Activated B cell treated with CpG ODN at 0.5 μM for 24 hours (primary cell): ENCODE measurements at regions of chr3 and their contacts with region 1.

Region 1: GRCh38 chr3:128187495-128187894 is 34.2 kb downstream of the EEFSEC start:
- DNase-seq: no peak
- ATAC-seq: no peak
- H3K4me3 Mint-ChIP-seq: no peak overlapping the region
- H3K27ac Mint-ChIP-seq: no peak overlapping the region
- H3K4me1 Mint-ChIP-seq: peaks cover 10% of the 10 kb centered on the region
- H3K27me3 Mint-ChIP-seq: no peaks in the 10 kb centered on the region
- CTCF ChIP-seq: no peak

Region 2: DNA sequence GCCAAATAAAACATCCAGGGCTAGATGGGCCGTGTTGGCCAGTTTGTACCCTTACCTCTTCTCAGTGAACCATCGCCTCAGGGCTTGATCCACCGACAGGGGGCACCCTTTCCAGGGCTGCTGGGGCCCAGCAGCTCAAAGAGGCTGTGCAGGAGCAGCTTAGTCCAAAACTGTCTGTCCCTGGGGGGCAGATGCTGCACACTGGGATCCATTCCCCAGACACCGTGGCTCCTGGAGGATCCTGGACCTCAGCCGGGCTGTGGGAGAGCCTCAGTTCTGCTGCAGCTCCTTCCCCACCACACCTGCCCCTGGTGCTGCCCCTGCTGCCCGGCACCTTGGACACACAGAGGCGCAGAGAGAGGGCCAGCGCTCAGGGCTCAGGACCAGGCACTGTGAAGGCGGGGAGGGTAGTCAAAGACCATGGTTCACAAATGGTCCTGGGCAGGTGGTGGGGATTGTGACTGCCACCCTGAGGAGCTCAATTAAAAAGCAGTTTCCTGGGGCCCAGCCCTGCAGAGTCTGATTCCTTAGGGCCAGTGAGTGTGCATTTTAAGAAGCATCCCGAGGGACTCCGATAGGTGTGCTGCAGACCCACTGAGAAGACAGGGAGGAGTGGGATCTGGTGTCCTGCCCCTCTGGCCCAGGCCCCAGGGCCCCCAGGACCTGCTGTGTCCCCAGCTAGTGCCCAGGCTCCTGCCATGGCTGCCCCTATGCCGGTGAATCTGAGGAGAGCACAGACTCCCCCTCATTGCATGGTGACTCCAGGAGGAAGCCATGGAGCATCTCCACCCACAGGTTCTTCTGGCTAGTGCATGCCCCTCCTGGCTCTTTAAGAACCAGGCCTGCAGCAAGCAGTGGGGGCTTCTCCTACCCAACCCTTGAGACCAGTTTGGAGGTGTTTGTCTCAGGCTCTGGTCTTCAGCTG is 813.1 kb before region 1 on chr3:
- CTCF ChIA-PET with region 1: no interaction called
- POLR2A ChIA-PET with region 1: no interaction called
- intact Hi-C with region 1: no loop called
- DNase-seq: no peak
- ATAC-seq: no peak
- H3K4me3 Mint-ChIP-seq: no peak overlapping the region
- H3K27ac Mint-ChIP-seq: no peak overlapping the region
- H3K4me1 Mint-ChIP-seq: no peaks in the 10 kb centered on the region
- H3K27me3 Mint-ChIP-seq: peaks cover 17% of the 10 kb centered on the region
- CTCF ChIP-seq: no peak

Region 3: DNA sequence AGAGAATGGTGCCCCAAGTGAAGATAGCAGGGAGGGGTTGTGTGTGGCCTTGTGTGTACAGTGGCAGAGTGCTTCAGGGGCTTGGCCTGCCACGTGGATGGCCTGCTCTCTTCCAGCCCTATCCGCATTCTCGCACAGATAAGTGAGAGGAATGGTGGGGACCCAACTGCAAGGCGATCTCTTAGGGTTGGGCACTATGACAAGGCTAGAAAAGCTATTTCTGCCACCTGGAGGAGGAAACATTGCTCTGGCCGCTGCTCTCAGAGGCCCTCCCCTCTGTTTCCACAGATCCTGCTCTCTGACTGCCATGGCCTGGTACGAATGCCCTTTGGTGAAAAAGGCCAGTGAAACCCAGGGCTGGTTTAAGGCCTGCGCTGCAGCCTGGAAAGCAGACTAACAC is 13.6 kb before region 1 on chr3:
- CTCF ChIA-PET with region 1: no interaction called
- POLR2A ChIA-PET with region 1: no interaction called
- intact Hi-C with region 1: loop called (anchors 2 kb)
- DNase-seq: no peak
- ATAC-seq: no peak
- H3K4me3 Mint-ChIP-seq: no peak overlapping the region
- H3K27ac Mint-ChIP-seq: no peak overlapping the region
- H3K4me1 Mint-ChIP-seq: peaks cover 26% of the 10 kb centered on the region
- H3K27me3 Mint-ChIP-seq: no peaks in the 10 kb centered on the region
- CTCF ChIP-seq: no peak